MCF 10A (cell line): ENCODE measurements at regions of chr20 and their contacts with region 1.

Region 1: GRCh38 chr20:11204926-11205768 is 531.3 kb upstream of the JAG1 start:
- DNase-seq: peak; percentile 81
- H3K4me3 Mint-ChIP-seq: no peak overlapping the region
- H3K27ac Mint-ChIP-seq: no peak overlapping the region
- H3K4me1 Mint-ChIP-seq: peaks cover 33% of the 10 kb centered on the region
- H3K27me3 Mint-ChIP-seq: no peaks in the 10 kb centered on the region
- CTCF ChIP-seq: peak; percentile 58

Region 2: DNA sequence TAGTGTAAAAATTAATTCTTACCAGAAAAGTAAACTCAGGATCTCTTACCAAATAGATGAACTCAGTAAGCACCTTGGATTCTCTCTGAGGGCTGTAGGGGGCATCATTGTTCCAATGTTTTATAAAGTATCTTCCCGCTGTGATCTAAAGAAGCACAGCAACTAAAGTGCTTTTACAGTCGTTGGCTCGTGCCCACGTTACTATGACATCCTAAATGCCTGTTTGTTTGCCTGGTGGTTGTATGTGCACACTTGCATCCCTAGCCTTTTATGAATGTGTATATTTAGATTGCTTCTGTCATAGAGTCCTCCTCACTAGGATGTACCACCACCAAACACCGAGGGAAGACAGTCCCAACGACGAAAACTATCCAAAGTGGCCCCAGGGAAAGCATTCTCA is 735.5 kb before region 1 on chr20:
- CTCF ChIA-PET with region 1: no interaction called
- POLR2A ChIA-PET with region 1: no interaction called
- intact Hi-C with region 1: loop called (anchors 10 kb)
- DNase-seq: peak; percentile 81
- H3K4me3 Mint-ChIP-seq: no peak overlapping the region
- H3K27ac Mint-ChIP-seq: peak overlapping the region; percentile 59
- H3K4me1 Mint-ChIP-seq: peaks cover 13% of the 10 kb centered on the region
- H3K27me3 Mint-ChIP-seq: no peaks in the 10 kb centered on the region
- CTCF ChIP-seq: peak; percentile 61

Region 3: DNA sequence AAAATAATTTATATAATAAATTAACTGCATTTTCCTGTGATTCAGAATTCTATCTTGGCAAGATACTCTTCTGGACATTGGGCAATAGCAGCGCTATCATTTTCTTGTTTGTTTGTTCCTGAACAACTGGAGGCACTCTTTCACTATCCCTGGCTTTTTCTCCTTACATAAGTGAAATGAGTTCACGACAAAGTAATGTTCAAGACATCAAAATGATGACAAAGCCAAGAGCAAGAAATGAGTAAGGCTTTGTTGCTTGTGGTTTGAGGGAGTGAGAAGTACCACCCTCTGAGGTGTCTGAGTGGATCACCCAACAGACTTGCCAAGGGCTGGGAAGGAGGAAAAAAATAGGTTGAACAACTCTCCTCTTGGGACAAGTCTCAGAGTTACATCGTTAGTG is 64.8 kb before region 1 on chr20:
- CTCF ChIA-PET with region 1: interaction called, 8 read pairs
- POLR2A ChIA-PET with region 1: no interaction called
- intact Hi-C with region 1: loop called (anchors 2 kb)
- DNase-seq: peak; percentile 84
- H3K4me3 Mint-ChIP-seq: no peak overlapping the region
- H3K27ac Mint-ChIP-seq: peak overlapping the region; percentile 29
- H3K4me1 Mint-ChIP-seq: peaks cover 6% of the 10 kb centered on the region
- H3K27me3 Mint-ChIP-seq: no peaks in the 10 kb centered on the region
- CTCF ChIP-seq: no peak

Region 4: GRCh38 chr20:11178946-11179654 is 26.0 kb before region 1 on chr20:
- CTCF ChIA-PET with region 1: interaction called, 13 read pairs
- POLR2A ChIA-PET with region 1: interaction called, 7 read pairs
- intact Hi-C with region 1: no loop called
- DNase-seq: peak; percentile 77
- H3K4me3 Mint-ChIP-seq: no peak overlapping the region
- H3K27ac Mint-ChIP-seq: no peak overlapping the region
- H3K4me1 Mint-ChIP-seq: peaks cover 10% of the 10 kb centered on the region
- H3K27me3 Mint-ChIP-seq: no peaks in the 10 kb centered on the region
- CTCF ChIP-seq: peak; percentile 20

Region 5: GRCh38 chr20:11216451-11217314 is 11.5 kb after region 1 on chr20:
- CTCF ChIA-PET with region 1: interaction called, 13 read pairs
- POLR2A ChIA-PET with region 1: interaction called, 8 read pairs
- intact Hi-C with region 1: no loop called
- DNase-seq: no peak
- H3K4me3 Mint-ChIP-seq: no peak overlapping the region
- H3K27ac Mint-ChIP-seq: no peak overlapping the region
- H3K4me1 Mint-ChIP-seq: peaks cover under 1% of the 10 kb centered on the region
- H3K27me3 Mint-ChIP-seq: no peaks in the 10 kb centered on the region
- CTCF ChIP-seq: no peak

Region 6: GRCh38 chr20:11267131-11267761 is 62.1 kb after region 1 on chr20:
- CTCF ChIA-PET with region 1: interaction called, 9 read pairs
- POLR2A ChIA-PET with region 1: interaction called, 5 read pairs
- intact Hi-C with region 1: loop called (anchors 2 kb)
- DNase-seq: peak; percentile 95
- H3K4me3 Mint-ChIP-seq: peak overlapping the region; percentile 8
- H3K27ac Mint-ChIP-seq: peak overlapping the region; percentile 76
- H3K4me1 Mint-ChIP-seq: peaks cover 21% of the 10 kb centered on the region
- H3K27me3 Mint-ChIP-seq: no peaks in the 10 kb centered on the region
- CTCF ChIP-seq: no peak

Region 7: DNA sequence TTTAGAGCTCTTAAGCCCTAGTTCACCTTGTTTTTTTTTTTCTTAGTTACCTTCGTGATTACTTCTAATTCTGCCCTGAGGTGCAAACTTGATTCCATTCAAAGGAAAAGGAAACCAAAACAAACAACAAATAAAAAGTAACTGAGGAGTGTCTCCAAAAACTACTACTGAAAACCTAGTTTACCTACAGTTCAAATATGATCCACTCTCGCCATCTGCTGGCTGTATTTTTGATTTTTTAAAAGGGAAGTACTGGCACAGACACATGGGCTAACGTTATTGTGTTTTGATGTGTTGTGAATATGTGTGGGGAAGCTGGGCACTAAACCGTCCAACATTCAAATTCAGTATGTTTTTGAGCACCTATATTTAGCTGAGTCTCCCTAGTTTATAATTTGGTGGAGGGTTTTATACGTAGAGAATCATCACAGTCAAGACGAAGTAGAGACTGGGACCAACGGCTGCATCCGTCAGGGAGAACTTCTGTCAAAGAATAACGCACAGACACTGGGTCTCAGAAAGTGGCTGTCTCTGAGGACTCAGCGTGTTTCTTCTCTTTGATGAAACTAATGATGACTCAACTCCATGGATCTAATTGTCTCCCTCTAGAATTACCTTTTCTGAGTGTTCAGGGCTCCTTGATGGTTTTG is 339.0 kb after region 1 on chr20:
- CTCF ChIA-PET with region 1: interaction called, 6 read pairs
- POLR2A ChIA-PET with region 1: no interaction called
- intact Hi-C with region 1: loop called (anchors 5 kb)
- DNase-seq: peak; percentile 75
- H3K4me3 Mint-ChIP-seq: no peak overlapping the region
- H3K27ac Mint-ChIP-seq: no peak overlapping the region
- H3K4me1 Mint-ChIP-seq: no peaks in the 10 kb centered on the region
- H3K27me3 Mint-ChIP-seq: no peaks in the 10 kb centered on the region
- CTCF ChIP-seq: peak; percentile 73